Activated naive CD4-positive, alpha-beta T cell treated with anti-CD3 and anti-CD28 coated beads for 36 hours (primary cell): ENCODE measurements at regions of chr10 and their contacts with region 1.

Region 1: DNA sequence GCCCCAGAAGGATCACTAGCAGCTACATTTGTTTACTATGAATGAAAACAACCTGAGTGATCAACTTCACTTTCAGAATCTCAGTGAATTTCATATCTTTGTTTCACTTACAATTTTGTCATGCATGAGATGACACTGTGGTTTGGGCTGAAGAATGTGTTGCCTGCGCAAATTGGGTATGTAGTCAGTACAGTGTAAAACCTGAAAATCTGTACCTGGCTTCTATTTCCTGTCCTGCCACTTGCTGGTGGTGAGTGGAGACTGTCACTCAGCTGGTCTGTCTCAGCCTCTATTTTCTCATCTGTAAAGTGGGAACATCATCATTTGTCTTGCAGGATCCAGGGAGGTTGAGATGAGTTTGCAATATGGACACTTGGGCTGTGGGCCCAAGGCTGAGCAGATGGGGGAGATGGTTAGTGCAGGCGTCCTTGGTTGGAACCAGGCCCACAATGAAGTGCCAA is 118.0 kb downstream of the WDFY4 start:
- DNase-seq: peak; percentile 28
- H3K4me3 Mint-ChIP-seq: no peak overlapping the region
- H3K27ac Mint-ChIP-seq: no peak overlapping the region
- H3K4me1 Mint-ChIP-seq: peaks cover 71% of the 10 kb centered on the region
- H3K27me3 Mint-ChIP-seq: no peaks in the 10 kb centered on the region

Region 2: GRCh38 chr10:48439581-48440041 is 363.0 kb before region 1 on chr10:
- CTCF ChIA-PET with region 1: no interaction called
- intact Hi-C with region 1: no loop called
- DNase-seq: no peak
- H3K4me3 Mint-ChIP-seq: no peak overlapping the region
- H3K27ac Mint-ChIP-seq: no peak overlapping the region
- H3K4me1 Mint-ChIP-seq: no peaks in the 10 kb centered on the region
- H3K27me3 Mint-ChIP-seq: no peaks in the 10 kb centered on the region

Region 3: DNA sequence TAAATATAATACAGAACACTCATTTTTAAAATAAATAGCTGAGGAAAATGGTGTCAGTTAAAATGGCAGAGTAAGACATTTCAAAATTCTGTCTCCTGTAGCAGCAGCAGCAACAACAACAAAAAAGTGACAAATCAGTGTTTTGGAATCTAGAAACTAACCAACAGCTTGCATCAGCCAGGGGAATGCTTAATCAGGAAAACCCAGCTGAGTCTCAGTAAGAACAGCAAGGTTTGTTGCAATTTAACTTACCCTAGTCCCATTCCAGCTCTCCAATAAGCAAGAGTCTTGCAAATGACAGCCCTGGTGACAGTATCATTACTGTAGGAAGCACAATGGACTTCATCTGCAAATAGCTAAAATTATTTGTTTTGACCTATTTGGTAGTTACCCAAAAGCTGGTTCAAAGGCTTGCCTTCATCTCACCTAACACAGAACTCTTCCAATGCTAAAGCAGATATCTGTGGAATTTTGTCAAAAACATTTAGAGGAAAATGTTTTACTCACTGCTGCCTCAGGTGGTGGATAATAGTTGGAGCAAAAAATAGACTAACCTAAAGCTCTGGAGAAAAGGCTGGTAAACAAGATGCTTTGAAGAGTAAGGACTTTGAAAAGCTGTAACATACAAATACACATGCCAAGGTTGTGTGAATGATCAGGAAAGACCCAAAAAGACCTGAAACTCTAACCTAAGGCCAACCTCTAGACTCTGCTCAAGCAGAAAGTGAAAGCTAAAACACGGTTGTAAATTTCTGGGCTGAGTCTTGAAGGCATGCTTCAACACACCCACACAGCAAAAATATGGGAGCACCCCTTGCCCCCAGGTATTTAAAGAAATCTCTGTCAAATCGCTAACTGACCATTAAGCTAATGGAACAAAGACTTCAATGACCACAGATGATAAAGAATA is 187.9 kb before region 1 on chr10:
- CTCF ChIA-PET with region 1: no interaction called
- intact Hi-C with region 1: no loop called
- DNase-seq: no peak
- H3K4me3 Mint-ChIP-seq: no peak overlapping the region
- H3K27ac Mint-ChIP-seq: no peak overlapping the region
- H3K4me1 Mint-ChIP-seq: no peaks in the 10 kb centered on the region
- H3K27me3 Mint-ChIP-seq: peaks cover 38% of the 10 kb centered on the region

Region 4: GRCh38 chr10:49177391-49178355 is 375.0 kb after region 1 on chr10:
- CTCF ChIA-PET with region 1: no interaction called
- intact Hi-C with region 1: loop called (anchors 5 kb)
- DNase-seq: peak; percentile 66
- H3K4me3 Mint-ChIP-seq: no peak overlapping the region
- H3K27ac Mint-ChIP-seq: peak overlapping the region; percentile 18
- H3K4me1 Mint-ChIP-seq: peaks cover 18% of the 10 kb centered on the region
- H3K27me3 Mint-ChIP-seq: peaks cover 12% of the 10 kb centered on the region

Region 5: GRCh38 chr10:49538381-49539319 is 736.0 kb after region 1 on chr10 and contains the start of gene ERCC6:
- CTCF ChIA-PET with region 1: no interaction called
- intact Hi-C with region 1: loop called (anchors 5 kb)
- DNase-seq: peak; percentile 97
- H3K4me3 Mint-ChIP-seq: peak within 1 kb of the TSS; percentile 90
- H3K27ac Mint-ChIP-seq: peak within 1 kb of the TSS; percentile 92
- H3K4me1 Mint-ChIP-seq: peaks cover 34% of the 10 kb centered on the region
- H3K27me3 Mint-ChIP-seq: peaks cover 14% of the 10 kb centered on the region
- total RNA-seq, gene ERCC6: 14.2 to 16.2 TPM